ENCODE measurements at regions of chr15 and their contacts with region 1.

Region 1: GRCh38 chr15:80020731-80021130 is 38.7 kb upstream of the ZFAND6 start:
- DNase-seq: no peak
- H3K4me3 Mint-ChIP-seq: no peak overlapping the region
- H3K27ac Mint-ChIP-seq: no peak overlapping the region
- H3K4me1 Mint-ChIP-seq: peaks cover 9% of the 10 kb centered on the region
- H3K27me3 Mint-ChIP-seq: no peaks in the 10 kb centered on the region

Region 2: DNA sequence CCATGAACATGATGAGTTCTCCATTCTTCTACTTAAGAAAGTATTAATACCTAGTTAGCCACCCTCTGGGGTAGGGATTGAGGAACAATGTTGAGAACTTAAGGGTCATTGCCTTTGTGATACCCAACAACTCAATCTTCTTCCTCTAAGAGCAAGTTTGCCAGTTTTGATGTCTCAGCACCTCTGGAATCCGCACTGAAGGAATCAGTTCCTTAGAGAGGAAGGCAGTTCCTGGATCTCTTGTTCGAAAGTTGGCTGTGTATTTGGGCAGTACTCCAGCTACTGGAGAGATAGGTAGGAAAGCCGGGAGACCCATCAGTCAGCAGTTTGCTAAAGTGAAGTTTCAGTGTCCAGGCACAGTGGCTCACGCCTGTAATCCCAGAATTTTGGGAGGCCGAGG is 88.3 kb before region 1 on chr15:
- intact Hi-C with region 1: no loop called
- DNase-seq: no peak
- H3K4me3 Mint-ChIP-seq: no peak overlapping the region
- H3K27ac Mint-ChIP-seq: no peak overlapping the region
- H3K4me1 Mint-ChIP-seq: peaks cover 7% of the 10 kb centered on the region
- H3K27me3 Mint-ChIP-seq: peaks cover 7% of the 10 kb centered on the region

Region 3: GRCh38 chr15:80031841-80032240 is 11.1 kb after region 1 on chr15:
- intact Hi-C with region 1: loop called (anchors 1 kb)
- DNase-seq: peak; percentile 62
- H3K4me3 Mint-ChIP-seq: peak overlapping the region; percentile 59
- H3K27ac Mint-ChIP-seq: peak overlapping the region; percentile 79
- H3K4me1 Mint-ChIP-seq: peaks cover 26% of the 10 kb centered on the region
- H3K27me3 Mint-ChIP-seq: no peaks in the 10 kb centered on the region